GM10248 (cell line): ENCODE measurements at regions of chr7 and their contacts with region 1.

Region 1: DNA sequence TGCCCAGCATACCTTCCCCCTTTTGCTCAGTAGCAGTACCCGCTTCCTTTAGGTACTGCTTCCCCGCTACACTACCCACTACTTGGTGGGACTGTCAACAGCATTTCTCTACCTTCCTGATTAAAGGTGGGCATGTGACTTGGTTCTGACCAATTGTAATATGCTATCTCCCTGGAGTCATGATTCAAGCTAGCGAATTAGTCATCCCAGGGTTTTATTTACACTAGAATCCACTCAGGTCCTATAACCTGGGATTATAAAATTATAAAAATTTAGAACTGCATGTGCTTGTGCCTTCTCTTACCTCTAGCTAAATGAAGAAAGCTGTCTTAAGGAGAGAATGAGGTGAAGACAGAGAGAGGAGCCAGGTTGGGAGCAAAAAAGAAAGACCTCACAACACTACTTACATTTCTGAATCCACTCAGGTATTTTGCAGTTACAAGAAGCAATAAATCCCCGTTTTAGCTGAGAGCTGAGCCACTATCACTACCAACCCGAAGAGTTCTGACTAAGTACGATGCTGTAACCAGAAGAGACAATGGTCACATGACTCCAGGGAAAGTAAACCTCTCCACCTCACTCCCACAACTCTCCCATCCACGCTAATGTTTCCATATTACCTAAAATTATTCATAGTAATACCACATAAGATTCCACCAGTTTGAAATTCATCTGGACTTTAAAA is 9.7 kb downstream of the GBX1 start:
- DNase-seq: no peak
- CTCF ChIP-seq: no peak

Region 2: DNA sequence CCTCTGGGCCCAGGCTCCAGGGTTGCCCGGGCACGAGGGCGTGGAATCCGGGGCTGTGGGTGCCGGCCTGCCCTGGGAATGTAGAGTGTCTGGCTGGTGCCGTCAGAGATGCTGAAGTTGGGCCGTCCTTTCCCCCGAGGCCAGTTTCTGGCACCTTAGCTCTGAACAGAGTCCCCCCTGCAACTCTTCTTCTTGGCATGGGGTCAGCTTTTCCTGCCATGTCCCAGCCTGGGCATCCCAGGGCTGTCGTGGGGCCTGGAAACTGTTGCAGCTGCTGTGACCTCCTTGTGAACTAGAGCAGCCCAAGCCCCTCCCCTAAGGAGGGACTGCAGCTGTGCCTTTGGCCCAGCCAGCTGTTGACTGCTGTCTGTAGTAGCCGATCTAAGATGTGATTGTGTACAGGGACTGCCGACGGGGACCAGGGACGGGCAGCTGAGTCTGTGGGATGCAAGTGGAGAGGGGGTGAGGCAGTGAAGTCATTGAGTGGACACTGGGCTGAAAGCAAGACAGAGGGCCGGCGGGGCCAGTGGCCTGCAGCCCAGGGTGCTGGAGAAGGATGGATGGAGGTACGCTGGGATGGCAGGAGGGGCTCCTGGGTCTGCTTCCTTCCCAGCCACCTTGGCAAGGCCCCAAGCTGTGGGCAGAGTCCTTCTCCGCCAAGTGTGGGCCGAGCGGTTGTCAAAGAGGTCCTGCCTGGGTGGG is 26.0 kb before region 1 on chr7:
- CTCF ChIA-PET with region 1: no interaction called
- POLR2A ChIA-PET with region 1: no interaction called
- DNase-seq: no peak
- CTCF ChIP-seq: no peak

Region 3: DNA sequence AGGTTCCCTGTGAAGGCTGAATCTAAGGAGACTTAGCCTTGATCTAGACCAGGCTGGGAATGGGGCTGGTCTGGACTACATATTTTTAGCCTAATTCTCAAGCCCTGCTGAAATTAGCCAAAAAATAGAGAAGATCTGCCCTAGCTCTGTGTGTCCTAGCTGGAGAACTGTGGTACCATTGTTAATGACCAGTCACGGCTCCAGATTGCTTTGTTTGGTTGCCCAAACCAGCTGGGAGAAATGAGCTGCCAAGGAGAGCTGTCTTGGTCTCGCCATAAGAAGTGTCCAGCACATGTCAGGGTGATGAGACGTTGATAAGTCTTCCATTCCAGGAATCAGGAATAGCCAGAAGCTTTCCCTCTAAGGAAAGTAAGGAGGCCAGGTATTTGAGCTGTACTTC is 11.0 kb before region 1 on chr7:
- CTCF ChIA-PET with region 1: interaction called, 12 read pairs
- POLR2A ChIA-PET with region 1: no interaction called
- DNase-seq: no peak
- CTCF ChIP-seq: no peak

Region 4: DNA sequence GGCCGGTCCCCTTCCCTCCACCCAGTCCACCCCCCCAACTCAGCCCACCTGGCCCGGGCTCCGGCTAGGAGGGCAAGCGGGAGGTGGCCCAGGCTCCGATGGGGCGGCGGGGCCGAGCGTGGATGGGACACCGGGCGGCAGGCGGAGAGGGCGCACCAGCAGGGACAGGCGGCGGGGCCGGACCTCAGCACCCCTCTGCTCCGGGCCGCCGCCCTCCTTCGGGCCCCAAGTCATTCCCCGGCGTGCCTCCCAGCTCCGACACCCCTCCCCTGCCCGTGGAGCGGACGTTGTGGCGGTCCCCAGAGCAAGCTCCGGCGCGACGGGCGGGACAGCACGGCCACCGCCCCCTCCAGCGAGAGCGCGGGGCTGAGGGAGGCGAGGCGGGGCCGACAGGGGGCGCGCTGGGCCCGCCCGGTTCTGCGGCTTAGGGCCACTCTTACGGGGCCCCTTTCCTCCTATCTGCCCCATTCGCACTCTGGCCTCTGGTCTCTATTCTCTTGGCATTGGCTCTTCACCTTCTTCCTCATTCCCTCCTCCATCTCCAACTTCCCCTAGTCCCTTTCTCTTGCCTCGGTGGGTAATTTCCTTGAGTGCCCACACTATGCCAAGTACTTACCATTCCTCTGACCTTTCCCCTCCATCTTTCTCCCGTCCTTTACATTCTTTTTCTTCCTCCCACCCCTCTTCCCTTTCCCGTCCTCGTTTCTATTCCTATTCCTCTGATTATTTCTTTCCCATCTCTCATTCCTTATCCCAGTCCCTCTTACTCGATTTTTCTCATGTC is 10.4 kb after region 1 on chr7:
- CTCF ChIA-PET with region 1: interaction called, 10 read pairs
- POLR2A ChIA-PET with region 1: no interaction called
- DNase-seq: peak; percentile 79
- CTCF ChIP-seq: peak; percentile 75

Region 5: GRCh38 chr7:151558575-151558974 is 400.8 kb after region 1 on chr7:
- CTCF ChIA-PET with region 1: no interaction called
- POLR2A ChIA-PET with region 1: no interaction called
- DNase-seq: no peak
- CTCF ChIP-seq: no peak